Sciatic nerve (tissue), 2 donors: ENCODE measurements at regions of chr6 and their contacts with region 1.

Region 1: DNA sequence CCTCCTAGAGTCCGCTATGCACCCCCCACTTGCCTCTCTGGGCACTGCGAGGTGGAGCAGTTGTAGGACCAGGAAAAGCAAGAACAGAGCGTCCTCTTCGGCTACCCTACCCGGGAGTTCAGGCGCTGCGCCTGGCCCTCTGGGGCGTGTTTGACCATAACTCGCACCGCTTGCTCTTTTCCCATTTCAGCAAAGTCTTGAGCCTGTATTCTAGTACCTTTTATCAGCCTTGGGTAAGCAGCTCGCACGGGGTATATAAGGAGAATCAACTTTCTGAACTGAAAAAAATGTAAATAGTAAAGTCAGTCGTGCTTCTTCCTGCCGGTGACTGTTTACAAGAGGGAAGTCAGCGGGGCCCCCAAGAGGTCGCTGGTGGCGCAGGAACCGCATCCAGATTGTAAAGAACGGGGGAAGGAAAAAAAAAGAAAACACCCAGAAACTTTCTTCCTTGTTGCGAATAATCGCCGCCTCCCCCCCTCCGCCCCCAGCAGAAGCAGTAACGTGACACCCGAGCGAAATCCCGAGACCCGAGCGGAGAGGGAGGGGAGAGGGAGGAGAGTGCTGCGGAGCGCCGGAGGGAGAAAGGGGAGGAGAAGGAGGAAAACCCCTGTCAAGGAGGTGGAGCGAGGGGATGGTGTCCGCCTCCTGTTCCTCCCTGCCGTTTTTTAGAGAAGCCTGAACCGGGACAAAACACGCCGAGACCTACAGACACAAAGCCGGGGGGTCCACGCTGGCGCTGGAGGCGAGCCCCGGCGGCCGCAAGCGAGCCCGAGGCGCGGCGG is at the start of gene UST:
- DNase-seq: peak; percentile 92
- ATAC-seq: peak; percentile 97
- total RNA-seq, gene UST: 33.1 TPM

Region 2: GRCh38 chr6:147022041-147022440 is 1724.5 kb before region 1 on chr6:
- intact Hi-C with region 1: no loop called
- DNase-seq: no peak
- ATAC-seq: no peak

Region 3: DNA sequence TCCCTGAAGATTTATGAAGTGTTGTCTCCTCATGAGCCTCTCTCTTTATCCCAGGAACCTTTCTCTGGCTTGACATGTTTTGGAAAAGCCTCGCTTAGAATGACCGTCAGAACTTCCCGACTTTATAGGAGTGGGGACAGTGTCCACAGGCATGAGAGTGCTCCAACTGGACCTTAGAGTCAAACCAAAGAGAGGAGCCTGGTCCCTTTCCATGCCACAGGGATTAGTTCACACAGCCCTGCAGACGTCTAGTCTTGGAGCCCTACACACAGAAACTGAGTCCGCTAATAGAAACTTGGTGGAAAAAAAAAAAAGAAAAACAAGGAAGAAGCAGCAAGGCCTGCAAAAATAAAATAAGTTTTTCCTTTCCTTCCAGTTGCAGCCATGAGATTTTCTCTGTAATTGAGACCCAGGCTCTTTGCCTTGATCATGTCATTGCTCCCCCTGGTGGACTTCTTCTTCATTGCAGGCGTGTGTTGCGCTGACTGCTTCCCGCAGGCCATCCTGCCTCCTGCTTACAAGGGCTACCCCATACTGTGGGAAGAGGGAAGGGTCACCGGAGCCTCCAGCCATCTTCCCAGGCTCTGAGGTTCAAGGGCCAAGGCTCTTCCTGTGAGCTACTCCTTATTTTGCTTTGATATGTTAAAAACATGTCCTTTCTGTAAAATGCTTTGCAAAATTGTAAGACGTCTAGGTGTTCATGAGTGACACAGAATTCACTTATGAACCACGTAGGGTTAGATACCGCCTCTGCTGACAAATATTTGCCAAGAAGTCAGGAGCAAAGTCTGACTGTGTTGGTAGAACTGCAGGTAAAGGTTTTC is 201.3 kb after region 1 on chr6:
- intact Hi-C with region 1: loop called (anchors 10 kb)
- DNase-seq: peak; percentile 93
- ATAC-seq: peak; percentile 92